BJ (cell line): ENCODE measurements at regions of chr1 and their contacts with region 1.

Region 1: GRCh38 chr1:15430787-15431570 is 7.3 kb upstream of the CTRC start:
- DNase-seq: no peak
- H3K4me3 ChIP-seq: no peak overlapping the region
- H3K27me3 ChIP-seq: no peaks in the 10 kb centered on the region
- CTCF ChIP-seq: peak; percentile 95

Region 2: GRCh38 chr1:13781907-13782644 is 1648.9 kb before region 1 on chr1:
- CTCF ChIA-PET with region 1: no interaction called
- POLR2A ChIA-PET with region 1: no interaction called
- DNase-seq: no peak
- H3K4me3 ChIP-seq: peak overlapping the region; percentile 10; the same call in 1 of the 2 replicates
- H3K27me3 ChIP-seq: no peaks in the 10 kb centered on the region
- CTCF ChIP-seq: no peak

Region 3: DNA sequence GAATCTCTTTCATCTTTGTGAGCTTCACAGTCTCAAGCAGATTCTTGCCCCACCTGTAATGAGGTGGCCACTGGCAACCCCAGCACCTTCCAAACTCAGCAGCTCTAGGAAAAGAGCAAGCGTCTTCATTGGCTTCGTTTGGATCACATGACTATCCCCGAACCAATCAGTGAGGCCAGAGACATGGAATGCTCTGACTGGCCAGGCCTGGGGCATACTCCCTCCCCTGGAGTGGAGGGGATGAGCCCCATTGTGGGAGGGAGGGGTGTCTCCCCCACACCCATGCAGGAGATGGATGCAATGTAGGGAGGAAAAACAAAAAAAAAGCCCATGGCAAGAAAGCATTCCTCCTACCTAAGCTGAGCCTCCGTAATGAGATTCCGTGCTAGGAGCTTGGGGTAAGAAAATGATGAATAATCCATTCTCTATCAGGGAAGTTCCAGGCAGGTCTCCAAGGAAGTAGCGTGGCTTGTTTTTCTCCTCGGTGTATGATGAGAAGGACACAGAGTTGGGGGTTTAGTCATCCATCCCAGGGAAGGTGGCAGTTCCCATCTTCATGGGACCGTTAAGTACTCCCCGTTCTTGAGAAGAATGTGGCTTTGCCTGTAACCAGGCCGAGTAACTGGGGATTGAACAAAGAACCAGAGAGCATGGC is 151.3 kb before region 1 on chr1:
- CTCF ChIA-PET with region 1: no interaction called
- POLR2A ChIA-PET with region 1: no interaction called
- DNase-seq: no peak
- H3K4me3 ChIP-seq: no peak overlapping the region
- H3K27me3 ChIP-seq: peaks cover 3% of the 10 kb centered on the region
- CTCF ChIP-seq: no peak

Region 4: GRCh38 chr1:15311880-15312279 is 119.1 kb before region 1 on chr1:
- CTCF ChIA-PET with region 1: interaction called, 15 read pairs
- POLR2A ChIA-PET with region 1: no interaction called
- DNase-seq: no peak
- H3K4me3 ChIP-seq: no peak overlapping the region
- H3K27me3 ChIP-seq: peaks cover 4% of the 10 kb centered on the region
- CTCF ChIP-seq: no peak

Region 5: DNA sequence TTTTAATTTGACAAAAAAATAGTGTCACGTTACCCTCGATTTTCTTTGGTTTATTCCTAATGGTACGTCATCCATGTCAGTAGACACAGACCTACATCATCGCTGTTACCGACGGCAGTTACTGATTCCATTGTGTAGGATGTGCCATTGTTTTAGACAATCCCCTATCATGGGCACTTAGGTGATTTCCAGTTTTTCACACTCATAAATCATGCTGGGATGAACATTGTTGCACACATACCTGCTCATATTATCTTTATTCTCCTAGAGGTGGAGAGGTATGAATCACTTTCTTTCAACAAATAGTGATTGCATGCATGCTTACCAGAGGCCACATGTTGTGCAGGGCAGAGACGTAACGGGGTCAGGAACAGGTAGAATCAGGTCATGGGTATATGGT is 101.0 kb before region 1 on chr1:
- CTCF ChIA-PET with region 1: interaction called, 242 read pairs
- POLR2A ChIA-PET with region 1: no interaction called
- DNase-seq: no peak
- H3K4me3 ChIP-seq: no peak overlapping the region
- H3K27me3 ChIP-seq: peaks cover 1% of the 10 kb centered on the region; the same call in 1 of the 2 replicates
- CTCF ChIP-seq: no peak

Region 6: GRCh38 chr1:15406609-15407559 is 24.1 kb before region 1 on chr1:
- CTCF ChIA-PET with region 1: interaction called, 16 read pairs
- POLR2A ChIA-PET with region 1: no interaction called
- DNase-seq: peak; percentile 75
- H3K4me3 ChIP-seq: no peak overlapping the region
- H3K27me3 ChIP-seq: no peaks in the 10 kb centered on the region
- CTCF ChIP-seq: no peak

Region 7: DNA sequence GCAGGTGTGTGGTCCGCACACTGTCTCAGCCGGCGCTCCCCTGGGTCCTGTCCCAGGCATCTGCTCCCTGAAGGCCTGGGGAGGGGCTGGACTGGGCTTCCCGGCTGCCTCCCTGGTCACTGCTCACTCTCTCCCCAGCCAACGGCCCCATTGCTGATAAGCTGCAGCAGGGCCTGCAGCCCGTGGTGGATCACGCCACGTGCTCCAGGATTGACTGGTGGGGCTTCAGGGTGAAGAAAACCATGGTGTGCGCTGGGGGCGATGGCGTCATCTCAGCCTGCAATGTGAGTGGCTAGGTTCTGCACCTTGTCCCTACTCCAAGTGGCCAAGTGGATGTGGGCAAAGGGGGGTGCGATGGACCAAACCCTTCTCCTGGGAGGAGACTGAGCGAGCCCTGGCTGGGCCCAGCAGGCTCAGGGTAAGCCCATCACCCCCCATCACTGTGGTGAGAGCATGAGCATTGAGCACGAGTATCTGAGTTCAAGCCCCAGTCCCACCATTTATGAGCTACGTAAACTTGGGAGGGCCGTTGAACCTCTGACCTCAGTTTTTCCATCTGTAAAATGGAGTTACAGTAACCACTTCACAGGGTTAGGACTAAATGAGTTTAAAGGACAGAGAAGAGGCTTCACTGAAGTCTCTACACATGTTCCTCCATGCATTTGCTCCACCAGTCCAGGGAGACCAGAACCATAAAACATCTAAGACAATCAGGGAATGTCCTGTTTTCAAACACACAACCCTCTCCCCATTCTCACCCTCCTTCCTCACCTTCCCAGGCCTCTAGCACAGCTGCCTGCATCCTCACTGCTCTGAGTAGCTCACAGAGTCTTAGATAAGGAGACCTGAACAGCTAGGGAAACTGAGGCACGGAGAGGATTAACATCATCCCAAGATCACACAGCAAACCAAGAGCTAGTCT is 13.8 kb after region 1 on chr1:
- CTCF ChIA-PET with region 1: interaction called, 19 read pairs
- POLR2A ChIA-PET with region 1: no interaction called
- DNase-seq: no peak
- H3K4me3 ChIP-seq: no peak overlapping the region
- H3K27me3 ChIP-seq: peaks cover 9% of the 10 kb centered on the region
- CTCF ChIP-seq: no peak

Region 8: DNA sequence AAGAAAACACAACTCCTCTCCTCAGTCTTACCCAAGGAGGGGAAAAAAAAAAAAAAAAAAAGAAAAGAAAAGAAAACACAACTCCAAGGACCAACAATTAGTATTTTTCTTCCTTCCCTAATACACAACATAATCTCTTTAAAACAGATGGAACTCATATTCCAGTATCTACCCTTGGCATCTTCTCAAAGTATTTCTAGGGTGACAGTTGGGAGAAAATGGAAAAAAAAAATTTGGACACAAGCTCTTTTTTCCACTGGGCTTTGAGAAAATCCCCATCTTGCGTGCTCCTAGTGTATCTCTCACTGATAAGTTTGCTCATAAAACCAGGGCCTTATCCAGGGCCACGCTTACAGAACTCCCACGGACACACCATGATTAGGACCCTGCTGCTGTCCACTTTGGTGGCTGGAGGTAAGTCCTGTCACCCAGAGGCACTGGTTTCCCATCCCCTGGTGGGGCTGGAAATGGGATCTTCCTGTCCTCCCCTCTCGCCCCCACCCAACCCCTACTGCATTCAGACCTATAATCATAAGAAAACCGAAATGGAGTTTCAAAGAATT is 44.9 kb after region 1 on chr1 and contains the start of gene CELA2B:
- CTCF ChIA-PET with region 1: no interaction called
- POLR2A ChIA-PET with region 1: no interaction called
- DNase-seq: no peak
- H3K4me3 ChIP-seq: no peak within 1 kb of the TSS
- H3K27me3 ChIP-seq: no peaks in the 10 kb centered on the region
- CTCF ChIP-seq: no peak
- polyA plus RNA-seq, gene CELA2B: not detected in 2 replicates